Endothelial cell of umbilical vein (primary cell): ENCODE measurements at regions of chr10 and their contacts with region 1.

Region 1: DNA sequence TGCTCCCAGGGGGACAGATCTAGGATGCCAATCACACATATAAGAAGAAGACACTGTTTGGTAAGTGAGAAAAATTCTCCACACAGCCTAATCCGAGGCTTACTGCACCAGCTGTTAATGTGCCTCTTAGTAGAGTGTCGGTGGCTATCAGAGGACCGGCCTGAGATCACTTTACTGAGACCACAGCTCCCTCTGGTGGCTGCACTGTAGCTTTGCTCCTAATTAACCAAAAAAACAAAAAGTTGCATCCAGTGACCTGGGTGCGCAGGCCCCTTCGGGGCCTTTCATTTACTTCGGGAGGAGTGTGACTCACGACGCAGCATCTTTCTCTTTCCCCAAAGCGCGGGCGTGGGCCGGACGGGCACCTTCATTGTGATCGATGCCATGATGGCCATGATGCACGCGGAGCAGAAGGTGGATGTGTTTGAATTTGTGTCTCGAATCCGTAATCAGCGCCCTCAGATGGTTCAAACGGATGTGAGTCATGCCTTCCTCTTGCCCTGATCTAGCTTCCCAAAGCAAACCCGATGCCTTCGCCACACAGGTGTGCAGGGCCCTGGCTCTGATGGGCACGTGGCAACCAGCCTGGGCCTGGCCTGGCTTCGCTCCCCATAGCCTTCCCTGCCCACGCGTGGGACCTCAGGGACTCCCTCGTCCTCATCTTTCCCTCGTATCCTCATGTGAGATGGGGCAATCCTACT is 56.7 kb downstream of the MKI67 start:
- DNase-seq: peak; percentile 68
- H3K4me3 ChIP-seq: no peak overlapping the region
- H3K27ac ChIP-seq: no peak overlapping the region
- H3K4me1 ChIP-seq: peaks cover 2% of the 10 kb centered on the region
- H3K27me3 ChIP-seq: no peaks in the 10 kb centered on the region
- CTCF ChIP-seq: peak; percentile 65 to 67
- POLR2A ChIP-seq: no peak

Region 2: DNA sequence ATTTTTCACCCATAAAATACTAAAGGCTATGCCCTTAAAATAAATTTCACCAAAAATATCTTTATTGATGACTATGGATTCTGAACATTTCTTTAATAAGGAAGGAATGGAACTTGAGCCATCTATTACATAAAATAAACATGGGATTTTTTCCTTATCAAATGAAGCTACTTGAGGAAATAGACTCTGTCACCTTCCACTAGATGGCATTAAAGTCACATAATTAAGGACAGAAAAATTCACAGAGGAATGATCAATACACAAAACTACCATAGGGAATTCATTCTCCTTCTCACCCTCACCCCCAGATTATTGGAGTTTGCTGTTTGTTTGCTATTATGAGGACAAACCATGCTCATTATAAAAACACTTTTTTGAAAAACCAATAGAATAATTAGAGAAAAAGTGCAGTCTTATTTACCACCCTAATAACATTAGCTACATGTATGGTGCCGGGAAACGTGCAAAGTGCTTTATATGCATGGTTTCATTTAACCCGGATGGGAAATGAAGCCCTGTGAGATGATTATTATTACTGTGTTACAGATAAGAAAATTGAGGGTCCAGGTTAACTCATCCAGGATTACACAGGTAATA is 353.6 kb before region 1 on chr10:
- CTCF ChIA-PET with region 1: interaction called, 15 read pairs
- POLR2A ChIA-PET with region 1: no interaction called
- dilution Hi-C with region 1: no loop called
- intact Hi-C with region 1: no loop called
- DNase-seq: peak; percentile 25
- H3K4me3 ChIP-seq: no peak overlapping the region
- H3K27ac ChIP-seq: no peak overlapping the region
- H3K4me1 ChIP-seq: no peaks in the 10 kb centered on the region
- H3K27me3 ChIP-seq: no peaks in the 10 kb centered on the region
- CTCF ChIP-seq: peak in 1 of 2 donors; percentile 7
- POLR2A ChIP-seq: no peak

Region 3: DNA sequence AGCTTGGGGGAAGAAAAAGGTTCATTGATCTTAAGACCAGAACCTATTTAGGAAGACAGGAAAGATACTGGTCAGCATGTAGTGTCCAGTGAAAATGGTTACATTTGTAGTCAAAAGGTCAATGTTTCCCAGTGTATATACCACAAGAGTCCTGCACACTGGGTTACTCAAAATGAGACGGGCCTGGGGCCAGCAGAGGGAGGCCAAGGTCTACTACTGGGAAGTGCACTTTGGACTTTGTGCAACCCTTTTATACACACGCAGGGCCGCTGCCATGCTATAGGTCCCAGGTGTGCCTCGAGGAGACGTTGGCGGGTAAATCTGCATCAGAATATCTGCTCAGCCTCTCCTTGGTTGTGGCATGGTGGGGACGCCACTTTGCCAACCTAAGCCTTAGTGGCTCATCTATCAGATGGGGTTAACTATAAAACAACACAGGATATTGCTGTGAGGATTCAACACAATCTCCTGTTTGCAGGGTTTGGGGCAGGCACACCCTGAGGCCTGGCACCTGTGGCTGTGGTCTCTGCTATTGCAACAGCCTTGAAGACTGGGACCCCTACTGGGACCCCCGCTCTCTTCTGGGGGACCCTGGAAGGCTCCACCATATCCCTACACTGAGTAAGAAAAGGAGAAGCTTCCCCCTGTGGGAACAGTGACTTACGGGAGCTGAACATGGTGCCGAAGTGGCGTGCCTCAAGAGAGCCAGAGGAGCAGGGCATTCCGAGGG is 196.5 kb before region 1 on chr10:
- CTCF ChIA-PET with region 1: interaction called, 66 read pairs
- POLR2A ChIA-PET with region 1: no interaction called
- dilution Hi-C with region 1: no loop called
- intact Hi-C with region 1: loop called (anchors 1 kb)
- DNase-seq: peak; percentile 25
- H3K4me3 ChIP-seq: no peak overlapping the region
- H3K27ac ChIP-seq: no peak overlapping the region
- H3K4me1 ChIP-seq: peaks cover 5% of the 10 kb centered on the region
- H3K27me3 ChIP-seq: peaks cover 4 to 19% of the 10 kb centered on the region in 2 experiments
- CTCF ChIP-seq: peak; percentile 20 to 34
- POLR2A ChIP-seq: no peak

Region 4: GRCh38 chr10:128026614-128027300 is 42.7 kb before region 1 on chr10:
- CTCF ChIA-PET with region 1: interaction called, 11 read pairs
- POLR2A ChIA-PET with region 1: no interaction called
- dilution Hi-C with region 1: no loop called
- intact Hi-C with region 1: no loop called
- DNase-seq: peak; percentile 54
- H3K4me3 ChIP-seq: no peak overlapping the region
- H3K27ac ChIP-seq: peak overlapping the region; percentile 10
- H3K4me1 ChIP-seq: no peaks in the 10 kb centered on the region
- H3K27me3 ChIP-seq: no peaks in the 10 kb centered on the region
- CTCF ChIP-seq: no peak
- POLR2A ChIP-seq: no peak

Region 5: GRCh38 chr10:128047351-128047750 is 22.1 kb before region 1 on chr10:
- CTCF ChIA-PET with region 1: interaction called, 25 read pairs
- POLR2A ChIA-PET with region 1: no interaction called
- dilution Hi-C with region 1: no loop called
- intact Hi-C with region 1: no loop called
- DNase-seq: peak; percentile 80
- H3K4me3 ChIP-seq: no peak overlapping the region
- H3K27ac ChIP-seq: peak overlapping the region; percentile 58
- H3K4me1 ChIP-seq: peaks cover 17% of the 10 kb centered on the region
- H3K27me3 ChIP-seq: no peaks in the 10 kb centered on the region
- CTCF ChIP-seq: no peak
- POLR2A ChIP-seq: peak; percentile 28

Region 6: DNA sequence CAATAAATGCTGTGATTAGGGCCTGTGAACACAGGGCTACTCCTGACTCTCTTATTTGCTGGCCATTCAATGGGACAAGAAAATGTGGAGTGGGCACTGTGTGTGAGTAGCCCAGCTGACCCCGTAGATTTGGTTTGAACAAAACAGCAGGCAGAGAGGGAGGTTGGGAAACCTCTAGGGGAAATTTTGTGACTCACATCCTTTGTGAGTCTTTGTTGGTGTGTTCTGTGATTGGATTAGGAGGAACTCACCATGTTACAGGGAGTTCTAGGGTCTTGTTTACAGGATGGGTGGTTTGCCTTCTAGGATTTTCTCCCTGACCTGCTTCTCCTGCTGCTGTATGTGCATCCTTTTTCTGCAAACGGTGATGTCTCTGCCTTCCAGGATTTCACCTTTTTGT is 185.0 kb after region 1 on chr10:
- CTCF ChIA-PET with region 1: no interaction called
- POLR2A ChIA-PET with region 1: no interaction called
- dilution Hi-C with region 1: no loop called
- intact Hi-C with region 1: no loop called
- DNase-seq: peak; percentile 24
- H3K4me3 ChIP-seq: no peak overlapping the region
- H3K27ac ChIP-seq: no peak overlapping the region
- H3K4me1 ChIP-seq: peaks cover 10% of the 10 kb centered on the region
- H3K27me3 ChIP-seq: no peaks in the 10 kb centered on the region
- CTCF ChIP-seq: no peak
- POLR2A ChIP-seq: no peak